ENCODE measurements at regions of chr1 and their contacts with region 1.

Region 1: GRCh38 chr1:53393325-53393792 is 65.5 kb upstream of the LRP8 start:
- DNase-seq: peak; percentile 75
- ATAC-seq: peak; percentile 72
- H3K4me3 ChIP-seq: no peak overlapping the region
- H3K4me3 Mint-ChIP-seq: no peak overlapping the region
- H3K27ac ChIP-seq: no peak overlapping the region
- H3K27ac Mint-ChIP-seq: no peak overlapping the region
- H3K4me1 ChIP-seq: peaks cover 9 to 13% of the 10 kb centered on the region in 2 donors
- H3K4me1 Mint-ChIP-seq: peaks cover 16% of the 10 kb centered on the region
- H3K27me3 ChIP-seq: no peaks in the 10 kb centered on the region
- H3K27me3 Mint-ChIP-seq: no peaks in the 10 kb centered on the region
- CTCF ChIP-seq: peak; percentile 96

Region 2: GRCh38 chr1:53182111-53182593 is 211.2 kb before region 1 on chr1:
- CTCF ChIA-PET with region 1: no interaction called
- POLR2A ChIA-PET with region 1: no interaction called
- intact Hi-C with region 1: loop called (anchors 5 kb)
- DNase-seq: peak; percentile 82
- ATAC-seq: peak; percentile 61
- H3K4me3 ChIP-seq: no peak overlapping the region
- H3K4me3 Mint-ChIP-seq: no peak overlapping the region
- H3K27ac ChIP-seq: no peak overlapping the region
- H3K27ac Mint-ChIP-seq: no peak overlapping the region
- H3K4me1 ChIP-seq: peaks cover 0 to 6% of the 10 kb centered on the region in 2 donors
- H3K4me1 Mint-ChIP-seq: no peaks in the 10 kb centered on the region
- H3K27me3 ChIP-seq: peaks cover 0 to 25% (median 7%) of the 10 kb centered on the region in 4 experiments
- H3K27me3 Mint-ChIP-seq: peaks cover 34% of the 10 kb centered on the region
- CTCF ChIP-seq: peak; percentile 97

Region 3: DNA sequence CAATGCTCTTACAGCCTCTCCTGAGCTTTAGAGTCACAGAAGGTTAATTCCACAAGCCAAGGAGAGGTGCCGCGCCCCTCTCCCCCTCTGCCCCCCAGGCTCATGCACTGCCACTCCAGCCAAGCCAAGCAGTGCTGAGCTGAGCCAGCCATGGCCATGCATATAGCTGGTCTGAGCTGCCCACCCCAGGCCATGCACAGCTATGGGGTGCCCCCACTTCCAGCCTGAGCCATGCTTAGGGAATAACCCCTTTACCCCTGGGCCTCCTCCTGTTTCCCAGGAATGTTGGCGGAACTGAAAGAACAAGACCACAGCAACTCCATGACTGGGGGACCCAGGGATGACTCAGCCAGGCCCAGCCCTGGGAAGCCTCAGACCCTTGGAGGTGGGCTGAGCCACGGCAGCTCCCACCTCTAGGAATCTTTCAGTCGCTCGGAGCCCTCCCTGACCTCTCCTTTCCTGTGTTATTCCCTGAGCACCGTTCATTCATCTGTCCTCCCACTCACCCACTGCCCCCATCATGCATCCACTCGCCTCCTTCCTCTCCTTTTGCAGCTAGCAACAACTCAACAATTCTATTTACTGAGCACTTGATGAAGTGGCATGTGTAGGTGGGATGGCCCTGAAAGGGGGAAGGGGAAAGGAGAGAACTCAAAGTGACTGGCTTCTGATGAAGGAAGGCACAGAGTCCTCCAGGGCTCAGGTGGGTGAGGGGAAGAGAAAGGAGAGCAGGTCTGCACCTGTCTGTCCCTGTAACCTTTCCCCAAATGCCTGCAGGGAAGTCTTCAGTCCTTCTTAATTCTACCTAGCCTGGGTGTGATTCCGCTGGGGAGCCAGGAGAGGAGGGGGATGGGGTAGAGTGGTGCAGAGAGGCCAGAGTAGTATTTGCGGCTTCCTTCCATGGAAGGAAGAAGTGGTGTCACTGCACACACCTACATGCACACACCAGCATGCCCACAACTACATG is 120.7 kb before region 1 on chr1:
- CTCF ChIA-PET with region 1: interaction called, 350 read pairs
- POLR2A ChIA-PET with region 1: no interaction called
- intact Hi-C with region 1: no loop called
- DNase-seq: no peak
- ATAC-seq: no peak
- H3K4me3 ChIP-seq: no peak overlapping the region
- H3K4me3 Mint-ChIP-seq: no peak overlapping the region
- H3K27ac ChIP-seq: no peak overlapping the region
- H3K27ac Mint-ChIP-seq: no peak overlapping the region
- H3K4me1 ChIP-seq: peaks cover 0 to 10% of the 10 kb centered on the region in 2 donors
- H3K4me1 Mint-ChIP-seq: peaks cover 8% of the 10 kb centered on the region
- H3K27me3 ChIP-seq: no peaks in the 10 kb centered on the region
- H3K27me3 Mint-ChIP-seq: no peaks in the 10 kb centered on the region
- CTCF ChIP-seq: no peak

Region 4: GRCh38 chr1:53286955-53287354 is 106.4 kb before region 1 on chr1:
- CTCF ChIA-PET with region 1: interaction called, 350 read pairs
- POLR2A ChIA-PET with region 1: no interaction called
- intact Hi-C with region 1: no loop called
- DNase-seq: no peak
- ATAC-seq: no peak
- H3K4me3 ChIP-seq: no peak overlapping the region
- H3K4me3 Mint-ChIP-seq: no peak overlapping the region
- H3K27ac ChIP-seq: no peak overlapping the region
- H3K27ac Mint-ChIP-seq: no peak overlapping the region
- H3K4me1 ChIP-seq: peaks cover 0 to 2% of the 10 kb centered on the region in 2 donors
- H3K4me1 Mint-ChIP-seq: no peaks in the 10 kb centered on the region
- H3K27me3 ChIP-seq: no peaks in the 10 kb centered on the region
- H3K27me3 Mint-ChIP-seq: no peaks in the 10 kb centered on the region
- CTCF ChIP-seq: no peak

Region 5: GRCh38 chr1:53296117-53296749 is 97.1 kb before region 1 on chr1:
- CTCF ChIA-PET with region 1: interaction called, 16 read pairs
- POLR2A ChIA-PET with region 1: no interaction called
- intact Hi-C with region 1: no loop called
- DNase-seq: no peak
- ATAC-seq: no peak
- H3K4me3 ChIP-seq: no peak overlapping the region
- H3K4me3 Mint-ChIP-seq: no peak overlapping the region
- H3K27ac ChIP-seq: no peak overlapping the region
- H3K27ac Mint-ChIP-seq: no peak overlapping the region
- H3K4me1 ChIP-seq: peaks cover 13 to 20% of the 10 kb centered on the region in 2 donors
- H3K4me1 Mint-ChIP-seq: peaks cover 16% of the 10 kb centered on the region
- H3K27me3 ChIP-seq: no peaks in the 10 kb centered on the region
- H3K27me3 Mint-ChIP-seq: no peaks in the 10 kb centered on the region
- CTCF ChIP-seq: no peak

Region 6: GRCh38 chr1:53367503-53368304 is 25.7 kb before region 1 on chr1:
- CTCF ChIA-PET with region 1: interaction called, 17 read pairs
- POLR2A ChIA-PET with region 1: interaction called, 3 read pairs
- intact Hi-C with region 1: no loop called
- DNase-seq: peak; percentile 73
- ATAC-seq: peak; percentile 88
- H3K4me3 ChIP-seq: peak overlapping the region; percentile 19 to 75 (median 59)
- H3K4me3 Mint-ChIP-seq: peak overlapping the region; percentile 98
- H3K27ac ChIP-seq: peak overlapping the region; percentile 42 to 85
- H3K27ac Mint-ChIP-seq: peak overlapping the region; percentile 97
- H3K4me1 ChIP-seq: peaks cover 30 to 43% of the 10 kb centered on the region in 2 donors
- H3K4me1 Mint-ChIP-seq: peaks cover 45% of the 10 kb centered on the region
- H3K27me3 ChIP-seq: no peaks in the 10 kb centered on the region
- H3K27me3 Mint-ChIP-seq: no peaks in the 10 kb centered on the region
- CTCF ChIP-seq: no peak